ENCODE measurements at regions of chr7 and their contacts with region 1.

Region 1: DNA sequence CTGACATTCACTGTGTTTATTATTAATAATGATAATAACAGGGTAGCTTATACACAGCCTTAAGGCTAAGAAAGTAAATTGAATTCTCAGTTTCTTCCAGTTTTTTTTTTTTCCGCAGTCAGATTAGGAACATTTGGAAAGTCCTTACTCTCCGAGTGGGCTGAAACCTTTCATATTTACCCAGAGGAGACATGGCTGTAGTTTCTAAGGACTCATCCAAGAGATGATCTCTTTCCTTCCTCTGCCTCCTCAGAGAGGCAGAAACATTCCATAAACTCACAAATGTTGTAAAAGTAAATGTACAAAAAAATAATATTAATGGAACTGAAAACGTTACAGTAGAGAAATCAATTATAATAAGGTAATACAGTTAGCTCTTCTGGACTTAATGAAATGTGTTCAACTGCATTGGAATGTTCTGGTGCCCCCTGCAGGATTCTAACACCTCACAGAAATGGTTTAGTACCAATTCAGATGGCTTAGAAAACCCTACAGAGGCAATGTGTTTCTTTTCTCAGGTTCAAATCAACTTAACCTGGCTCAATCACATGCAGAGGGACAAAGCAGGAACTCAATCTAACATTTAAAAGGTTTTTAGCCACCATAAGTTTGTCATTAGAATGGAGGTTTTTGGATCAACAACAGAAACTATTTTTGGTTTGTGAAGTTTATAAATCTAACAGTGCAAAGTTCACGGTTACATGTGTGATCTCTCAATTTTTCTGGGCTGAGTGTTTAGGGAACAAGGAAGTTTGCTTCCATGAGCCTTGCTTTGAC is 71.7 kb downstream of the ICA1 start:
- DNase-seq: peak; percentile 79
- H3K4me3 Mint-ChIP-seq: no peak overlapping the region
- H3K27ac Mint-ChIP-seq: no peak overlapping the region
- H3K4me1 Mint-ChIP-seq: peaks cover 25% of the 10 kb centered on the region
- H3K27me3 Mint-ChIP-seq: peaks cover 2% of the 10 kb centered on the region

Region 2: DNA sequence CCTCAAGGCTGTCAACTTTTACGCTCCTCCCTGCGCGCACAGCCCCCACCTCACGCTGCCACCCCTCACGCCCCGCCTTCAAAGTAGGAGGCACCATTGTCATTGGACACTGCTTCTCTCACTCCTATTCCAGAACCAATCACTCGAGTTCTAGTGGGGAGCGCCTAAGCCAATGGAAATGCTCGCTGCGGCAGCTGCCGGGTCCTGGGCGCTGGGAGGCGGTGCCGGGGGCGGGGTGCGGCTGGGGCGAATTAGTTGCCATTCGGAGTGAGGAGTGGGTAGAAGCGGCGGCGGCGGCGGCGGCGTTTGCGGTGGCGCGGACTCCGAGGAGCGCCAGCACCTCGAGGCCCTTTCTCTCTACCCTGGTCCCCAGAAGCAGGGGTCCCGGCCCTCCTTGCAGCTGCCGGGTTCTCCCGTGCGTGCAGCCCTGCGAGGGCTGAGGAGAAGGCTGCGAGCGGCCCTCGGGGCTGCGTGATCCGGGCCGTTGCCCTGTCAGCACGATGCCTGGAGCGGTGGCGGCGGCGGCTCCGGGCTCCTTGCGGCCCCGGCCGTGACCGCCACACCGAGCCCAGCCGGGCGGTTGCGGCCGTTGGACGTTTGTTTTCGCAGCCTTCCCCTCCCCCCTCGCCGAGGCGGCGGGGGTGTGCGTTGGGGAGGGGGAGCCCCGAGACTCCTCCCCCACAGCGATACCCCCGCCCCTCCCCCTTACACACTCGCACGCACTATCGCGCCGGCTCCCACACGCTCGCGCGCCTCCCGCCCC is 221.6 kb before region 1 on chr7 and contains the start of gene GLCCI1:
- CTCF ChIA-PET with region 1: interaction called, 16 read pairs
- DNase-seq: peak; percentile 98
- H3K4me3 Mint-ChIP-seq: peak within 1 kb of the TSS; percentile 89
- H3K27ac Mint-ChIP-seq: peak within 1 kb of the TSS; percentile 95
- H3K4me1 Mint-ChIP-seq: peaks cover 27% of the 10 kb centered on the region
- H3K27me3 Mint-ChIP-seq: no peaks in the 10 kb centered on the region

Region 3: DNA sequence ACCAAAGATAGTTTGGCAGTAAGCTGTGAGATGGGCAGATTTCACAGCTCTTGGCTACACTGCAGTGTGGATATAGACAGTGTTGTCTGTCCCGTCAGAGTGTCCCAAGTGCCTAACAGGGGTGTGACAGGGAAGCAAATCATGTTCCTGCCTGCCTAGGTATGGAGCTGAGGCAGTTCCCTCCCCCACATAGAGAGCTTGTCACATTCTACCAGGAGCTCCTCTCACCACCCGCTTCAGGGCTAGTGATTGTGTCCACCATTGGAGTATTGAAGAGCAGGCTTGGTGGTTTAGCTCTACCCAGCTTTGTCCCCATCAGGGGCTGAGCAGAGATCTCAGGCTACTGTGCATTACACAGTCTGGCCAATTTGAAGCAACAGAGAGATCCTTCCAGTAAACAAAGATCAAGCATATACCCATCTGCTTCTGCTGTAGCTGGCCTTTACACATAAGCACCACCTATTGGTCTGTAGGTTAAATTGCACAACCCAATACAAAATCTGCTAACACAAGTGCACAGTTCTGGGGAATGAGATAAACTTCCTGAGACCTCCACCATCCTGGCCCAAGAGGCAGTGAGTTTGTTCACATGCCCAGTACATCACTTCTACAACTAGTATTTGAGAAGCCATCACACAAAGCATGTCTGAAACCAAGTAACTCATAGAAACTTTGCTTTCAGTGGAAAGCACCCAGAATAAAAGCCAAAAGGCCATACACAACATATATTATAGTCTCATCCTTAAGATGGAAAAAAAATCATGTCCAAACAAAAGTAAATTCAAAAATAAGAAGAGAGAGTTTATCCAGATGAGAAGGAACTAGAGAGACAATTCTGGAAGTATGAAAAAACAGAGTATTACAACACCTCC is 154.4 kb before region 1 on chr7:
- CTCF ChIA-PET with region 1: interaction called, 20 read pairs
- DNase-seq: no peak
- H3K4me3 Mint-ChIP-seq: no peak overlapping the region
- H3K27ac Mint-ChIP-seq: no peak overlapping the region
- H3K4me1 Mint-ChIP-seq: peaks cover 12% of the 10 kb centered on the region
- H3K27me3 Mint-ChIP-seq: no peaks in the 10 kb centered on the region

Region 4: GRCh38 chr7:8082762-8083161 is 107.5 kb before region 1 on chr7:
- CTCF ChIA-PET with region 1: no interaction called
- DNase-seq: no peak
- H3K4me3 Mint-ChIP-seq: no peak overlapping the region
- H3K27ac Mint-ChIP-seq: no peak overlapping the region
- H3K4me1 Mint-ChIP-seq: no peaks in the 10 kb centered on the region
- H3K27me3 Mint-ChIP-seq: no peaks in the 10 kb centered on the region

Measured in activated naive CD4-positive, alpha-beta T cell treated with anti-CD3 and anti-CD28 coated beads, Interleukin-2, amount 10 ng/mL, durations not matched to agents 7 days and 5 days (primary cell).